Endothelial cell of umbilical vein (primary cell): ENCODE measurements at regions of chr7 and their contacts with region 1.

Region 1: DNA sequence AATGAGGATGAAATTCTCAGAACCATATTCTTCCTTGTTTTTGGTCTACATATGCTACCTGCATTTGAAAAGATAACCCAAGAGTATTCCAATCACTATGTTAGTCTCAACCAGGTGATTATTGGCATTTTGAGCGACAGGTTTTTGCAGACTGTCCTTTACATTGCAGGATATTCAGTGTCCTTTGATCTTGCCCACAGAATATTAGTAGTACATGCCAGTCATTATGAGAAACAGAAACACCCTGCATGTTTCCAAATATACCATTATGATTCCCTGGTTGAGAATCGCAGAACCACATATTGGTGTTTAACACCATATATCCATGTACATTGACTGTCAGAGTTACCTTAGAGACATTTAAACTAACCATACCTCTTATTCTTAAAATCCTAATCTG is 30.6 kb downstream of the TMEM243 start:
- DNase-seq: no peak
- H3K4me3 ChIP-seq: no peak overlapping the region
- H3K27ac ChIP-seq: no peak overlapping the region
- H3K4me1 ChIP-seq: no peaks in the 10 kb centered on the region
- H3K27me3 ChIP-seq: no peaks in the 10 kb centered on the region
- CTCF ChIP-seq: no peak
- POLR2A ChIP-seq: no peak

Region 2: DNA sequence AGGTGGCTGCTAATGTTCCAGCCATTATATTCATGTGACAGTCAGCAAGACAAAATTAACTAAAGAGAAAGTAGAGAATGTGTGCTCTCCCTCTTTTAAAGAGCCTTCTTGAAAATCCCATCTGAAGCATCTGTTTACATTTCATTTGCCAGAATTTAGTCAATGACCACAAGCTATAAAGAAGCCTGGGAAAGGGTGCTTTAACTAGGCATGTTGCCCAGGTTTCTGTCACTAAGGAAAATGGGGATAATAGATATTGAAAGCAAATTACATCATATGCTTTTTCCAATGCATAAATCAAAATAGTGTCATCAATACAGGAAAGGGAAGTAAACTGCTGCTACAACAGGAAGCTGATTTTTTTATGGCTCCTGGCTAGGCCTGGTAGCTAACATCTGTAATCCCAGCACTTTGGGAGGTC is 197.1 kb before region 1 on chr7:
- CTCF ChIA-PET with region 1: no interaction called
- POLR2A ChIA-PET with region 1: no interaction called
- dilution Hi-C with region 1: no loop called
- intact Hi-C with region 1: no loop called
- DNase-seq: peak; percentile 81
- H3K4me3 ChIP-seq: no peak overlapping the region
- H3K27ac ChIP-seq: peak overlapping the region; percentile 33
- H3K4me1 ChIP-seq: peaks cover 9% of the 10 kb centered on the region
- H3K27me3 ChIP-seq: no peaks in the 10 kb centered on the region
- CTCF ChIP-seq: no peak
- POLR2A ChIP-seq: no peak

Region 3: GRCh38 chr7:87091495-87092190 is 97.3 kb before region 1 on chr7:
- CTCF ChIA-PET with region 1: no interaction called
- POLR2A ChIA-PET with region 1: no interaction called
- dilution Hi-C with region 1: no loop called
- intact Hi-C with region 1: no loop called
- DNase-seq: no peak
- H3K4me3 ChIP-seq: no peak overlapping the region
- H3K27ac ChIP-seq: no peak overlapping the region
- H3K4me1 ChIP-seq: no peaks in the 10 kb centered on the region
- H3K27me3 ChIP-seq: peaks cover 4% of the 10 kb centered on the region in 2 experiments
- CTCF ChIP-seq: no peak
- POLR2A ChIP-seq: no peak

Region 4: DNA sequence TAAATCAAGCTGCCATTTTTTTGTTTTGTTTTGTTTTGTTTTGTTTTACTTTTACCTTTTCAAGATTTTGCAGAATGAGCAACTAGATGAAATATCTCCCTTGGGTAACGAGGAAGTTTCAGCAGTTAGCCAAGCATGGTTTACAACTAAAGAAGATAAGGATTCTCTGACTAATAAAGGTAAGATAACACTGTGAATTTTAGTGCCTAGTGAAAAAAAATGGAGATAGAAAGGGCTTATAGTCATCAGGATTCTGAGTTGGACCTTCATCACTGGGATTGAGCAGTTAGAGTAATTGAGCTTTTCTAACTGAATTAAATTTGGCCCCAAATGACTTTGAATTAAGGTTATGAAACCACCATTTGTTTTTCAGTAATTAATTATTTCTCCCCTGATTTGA is 15.5 kb before region 1 on chr7:
- CTCF ChIA-PET with region 1: interaction called, 24 read pairs
- POLR2A ChIA-PET with region 1: no interaction called
- dilution Hi-C with region 1: no loop called
- intact Hi-C with region 1: loop called (anchors 2 kb)
- DNase-seq: no peak
- H3K4me3 ChIP-seq: no peak overlapping the region
- H3K27ac ChIP-seq: no peak overlapping the region
- H3K4me1 ChIP-seq: no peaks in the 10 kb centered on the region
- H3K27me3 ChIP-seq: no peaks in the 10 kb centered on the region
- CTCF ChIP-seq: no peak
- POLR2A ChIP-seq: no peak

Region 5: GRCh38 chr7:87199700-87200450 is 10.9 kb after region 1 on chr7:
- CTCF ChIA-PET with region 1: interaction called, 3 read pairs
- POLR2A ChIA-PET with region 1: no interaction called
- dilution Hi-C with region 1: no loop called
- intact Hi-C with region 1: loop called (anchors 2 kb)
- DNase-seq: peak; percentile 13
- H3K4me3 ChIP-seq: no peak overlapping the region
- H3K27ac ChIP-seq: no peak overlapping the region
- H3K4me1 ChIP-seq: no peaks in the 10 kb centered on the region
- H3K27me3 ChIP-seq: no peaks in the 10 kb centered on the region
- CTCF ChIP-seq: no peak
- POLR2A ChIP-seq: no peak